Caco-2 (cell line): ENCODE measurements at regions of chr14 and their contacts with region 1.

Region 1: GRCh38 chr14:36320200-36320896 is at the start of gene MBIP:
- DNase-seq: peak; percentile 91 to 95
- H3K4me3 ChIP-seq: peak within 1 kb of the TSS; percentile 79
- H3K4me3 Mint-ChIP-seq: peak within 1 kb of the TSS; percentile 89
- H3K27ac Mint-ChIP-seq: peak within 1 kb of the TSS; percentile 87
- H3K4me1 ChIP-seq: no peaks in the 10 kb centered on the region
- H3K4me1 Mint-ChIP-seq: no peaks in the 10 kb centered on the region
- H3K27me3 ChIP-seq: no peaks in the 10 kb centered on the region
- H3K27me3 Mint-ChIP-seq: peaks cover 3% of the 10 kb centered on the region
- CTCF ChIP-seq: no peak
- total RNA-seq, gene MBIP: 27.8 and 28.8 TPM in 2 replicates

Region 2: DNA sequence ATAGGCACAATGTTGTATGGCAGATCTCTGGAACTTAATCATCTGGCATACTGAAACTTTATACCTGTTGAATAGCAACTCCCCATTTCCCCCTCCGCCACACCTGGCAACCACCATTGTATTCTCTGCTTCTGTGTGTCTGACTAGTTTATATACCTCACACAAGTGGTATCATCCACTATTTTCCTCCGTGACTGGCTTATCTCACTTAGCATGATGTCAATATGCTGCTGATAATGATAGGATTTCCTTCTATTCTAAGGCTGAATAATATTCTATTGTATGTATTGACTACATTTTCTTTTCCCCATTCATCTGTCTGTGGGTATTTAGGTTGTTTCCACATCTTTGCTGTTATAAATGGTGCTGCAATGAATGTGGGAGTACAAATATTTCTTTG is 472.7 kb before region 1 on chr14:
- CTCF ChIA-PET with region 1: no interaction called
- POLR2A ChIA-PET with region 1: no interaction called
- intact Hi-C with region 1: no loop called
- DNase-seq: no peak
- H3K4me3 ChIP-seq: no peak overlapping the region
- H3K4me3 Mint-ChIP-seq: no peak overlapping the region
- H3K27ac Mint-ChIP-seq: no peak overlapping the region
- H3K4me1 ChIP-seq: no peaks in the 10 kb centered on the region
- H3K4me1 Mint-ChIP-seq: no peaks in the 10 kb centered on the region
- H3K27me3 ChIP-seq: no peaks in the 10 kb centered on the region
- H3K27me3 Mint-ChIP-seq: no peaks in the 10 kb centered on the region
- CTCF ChIP-seq: no peak

Region 3: GRCh38 chr14:36227802-36228201 is 92.5 kb before region 1 on chr14:
- CTCF ChIA-PET with region 1: no interaction called
- POLR2A ChIA-PET with region 1: no interaction called
- intact Hi-C with region 1: loop called (anchors 1 kb)
- DNase-seq: peak; percentile 10 to 46
- H3K4me3 ChIP-seq: no peak overlapping the region
- H3K4me3 Mint-ChIP-seq: no peak overlapping the region
- H3K27ac Mint-ChIP-seq: peak overlapping the region; percentile 64
- H3K4me1 ChIP-seq: peaks cover 22% of the 10 kb centered on the region
- H3K4me1 Mint-ChIP-seq: peaks cover 12% of the 10 kb centered on the region
- H3K27me3 ChIP-seq: no peaks in the 10 kb centered on the region; the same call in 1 of the 2 replicates
- H3K27me3 Mint-ChIP-seq: no peaks in the 10 kb centered on the region
- CTCF ChIP-seq: no peak

Region 4: DNA sequence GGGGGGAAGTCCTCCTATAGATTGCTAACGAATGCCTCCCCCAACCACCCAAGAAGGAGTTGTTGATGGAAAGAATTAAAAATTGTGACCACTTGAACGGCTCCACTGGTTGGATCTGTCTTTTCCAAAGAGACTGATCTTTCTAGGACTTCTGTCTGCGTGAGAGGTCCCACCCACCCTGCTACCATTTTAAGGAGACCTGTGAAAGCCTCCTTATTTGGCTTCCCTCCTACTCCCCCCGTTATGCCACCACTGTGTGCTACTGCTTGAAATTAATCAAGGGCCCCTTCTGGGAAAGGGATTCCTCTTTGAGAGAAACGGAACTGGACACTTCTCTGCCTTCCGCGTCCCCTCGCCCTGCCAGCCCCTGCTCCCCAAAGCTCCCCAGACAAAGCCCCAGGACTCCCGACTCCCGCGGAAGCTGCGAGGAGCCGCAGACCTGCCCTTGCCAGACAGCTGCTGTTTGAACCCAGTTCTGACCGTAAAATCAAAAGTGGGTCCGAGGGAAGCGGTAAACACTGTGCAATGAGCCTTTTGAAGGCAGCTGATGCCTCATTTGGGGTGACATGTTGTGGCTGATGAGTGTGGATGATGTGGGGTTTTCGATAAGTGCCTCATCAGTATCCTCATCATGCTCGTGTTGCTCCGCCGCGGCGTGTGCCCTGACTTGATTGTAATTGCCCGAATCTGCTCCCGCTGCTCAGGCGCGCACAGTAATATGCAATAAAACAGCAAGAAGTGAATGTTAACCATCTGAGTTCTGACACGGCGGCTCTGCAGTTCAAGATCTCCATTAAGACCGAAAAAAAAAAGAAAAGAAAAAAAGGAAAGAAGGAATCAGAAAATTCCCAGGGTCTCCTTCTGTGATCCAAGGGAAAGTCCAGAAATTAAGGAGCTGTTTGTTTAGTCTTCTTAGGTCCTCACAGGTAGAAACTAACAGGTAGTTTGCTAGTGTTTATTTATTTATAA is 48.1 kb before region 1 on chr14:
- CTCF ChIA-PET with region 1: no interaction called
- POLR2A ChIA-PET with region 1: no interaction called
- intact Hi-C with region 1: no loop called
- DNase-seq: no peak
- H3K4me3 ChIP-seq: no peak overlapping the region
- H3K4me3 Mint-ChIP-seq: peak overlapping the region; percentile 46
- H3K27ac Mint-ChIP-seq: no peak overlapping the region
- H3K4me1 ChIP-seq: no peaks in the 10 kb centered on the region
- H3K4me1 Mint-ChIP-seq: no peaks in the 10 kb centered on the region
- H3K27me3 ChIP-seq: no peaks in the 10 kb centered on the region
- H3K27me3 Mint-ChIP-seq: peaks cover 2% of the 10 kb centered on the region
- CTCF ChIP-seq: no peak

Region 5: DNA sequence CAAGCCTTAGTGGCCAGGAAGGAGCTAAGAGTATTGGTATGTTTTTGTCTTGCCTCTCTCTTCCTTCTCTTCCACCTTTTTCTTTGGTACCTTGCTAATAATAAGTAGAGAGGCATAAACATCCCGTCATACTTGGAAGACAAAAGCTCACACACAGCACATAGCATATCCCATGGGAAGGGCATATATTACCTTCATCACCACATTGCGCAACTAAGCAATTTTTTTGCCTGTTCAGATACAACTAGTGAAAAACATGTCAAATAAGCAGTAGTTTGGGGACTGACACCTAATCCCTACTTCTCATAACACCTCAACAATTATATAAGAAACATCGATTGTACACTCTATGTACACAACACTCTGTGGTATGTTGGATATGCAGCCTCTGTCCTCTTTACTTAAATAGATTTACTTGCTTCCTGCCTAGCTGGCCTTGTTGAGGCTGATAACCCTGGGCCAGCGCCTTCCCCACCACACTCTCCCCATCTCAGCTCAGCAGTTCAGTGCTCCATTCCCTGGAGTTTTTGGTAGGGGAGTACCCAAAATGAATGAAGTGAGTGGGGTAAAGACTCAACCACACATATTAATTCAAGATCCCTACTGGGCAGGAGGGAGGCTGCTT is 35.3 kb before region 1 on chr14:
- CTCF ChIA-PET with region 1: no interaction called
- POLR2A ChIA-PET with region 1: interaction called, 14 read pairs
- intact Hi-C with region 1: loop called (anchors 1 kb)
- DNase-seq: no peak
- H3K4me3 ChIP-seq: no peak overlapping the region
- H3K4me3 Mint-ChIP-seq: no peak overlapping the region
- H3K27ac Mint-ChIP-seq: no peak overlapping the region
- H3K4me1 ChIP-seq: peaks cover 24% of the 10 kb centered on the region
- H3K4me1 Mint-ChIP-seq: peaks cover 42% of the 10 kb centered on the region
- H3K27me3 ChIP-seq: no peaks in the 10 kb centered on the region
- H3K27me3 Mint-ChIP-seq: no peaks in the 10 kb centered on the region
- CTCF ChIP-seq: no peak